RWPE1 (cell line): ENCODE measurements at regions of chr3 and their contacts with region 1.

Region 1: DNA sequence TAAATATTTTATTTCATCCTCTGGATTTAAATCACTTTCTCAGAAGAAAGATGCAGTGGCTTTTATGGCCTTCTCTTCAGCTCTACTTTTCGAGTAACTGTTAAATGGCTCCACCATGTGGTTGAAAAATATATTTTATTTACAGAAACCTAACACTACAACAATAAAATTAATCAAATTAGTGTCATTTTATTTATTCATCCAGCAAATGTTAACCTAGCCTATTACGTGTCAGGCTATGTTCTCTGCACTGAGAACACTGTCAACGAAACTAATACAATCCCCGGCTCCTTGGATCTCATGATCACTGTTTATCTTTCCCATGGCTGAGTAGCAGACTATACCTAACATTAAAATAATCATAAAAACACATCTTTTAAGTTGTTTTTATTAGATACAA is 148.0 kb upstream of the OSTN start:
- DNase-seq: peak; percentile 19
- H3K27ac ChIP-seq: no peak overlapping the region
- CTCF ChIP-seq: peak; percentile 52; the same call in 1 of the 2 replicates

Region 2: GRCh38 chr3:190883973-190884832 is 166.8 kb before region 1 on chr3:
- CTCF ChIA-PET with region 1: interaction called, 19 read pairs
- POLR2A ChIA-PET with region 1: no interaction called
- DNase-seq: peak; percentile 42
- H3K27ac ChIP-seq: no peak overlapping the region
- CTCF ChIP-seq: peak; percentile 95